ENCODE measurements at regions of chr5 and their contacts with region 1.

Region 1: GRCh38 chr5:171418316-171418981 is 998 bp upstream of the FGF18 start:
- DNase-seq: peak; percentile 90
- ATAC-seq: peak; percentile 85

Region 2: GRCh38 chr5:171494452-171495121 is 76.1 kb after region 1 on chr5:
- intact Hi-C with region 1: no loop called
- DNase-seq: peak; percentile 84
- ATAC-seq: peak; percentile 82

Region 3: GRCh38 chr5:171630027-171630669 is 211.7 kb after region 1 on chr5:
- intact Hi-C with region 1: loop called (anchors 10 kb)
- DNase-seq: peak; percentile 74
- ATAC-seq: peak; percentile 92

Region 4: GRCh38 chr5:171845857-171846256 is 427.4 kb after region 1 on chr5:
- intact Hi-C with region 1: loop called (anchors 2 kb)
- DNase-seq: peak; percentile 72
- ATAC-seq: peak; percentile 64

Region 5: DNA sequence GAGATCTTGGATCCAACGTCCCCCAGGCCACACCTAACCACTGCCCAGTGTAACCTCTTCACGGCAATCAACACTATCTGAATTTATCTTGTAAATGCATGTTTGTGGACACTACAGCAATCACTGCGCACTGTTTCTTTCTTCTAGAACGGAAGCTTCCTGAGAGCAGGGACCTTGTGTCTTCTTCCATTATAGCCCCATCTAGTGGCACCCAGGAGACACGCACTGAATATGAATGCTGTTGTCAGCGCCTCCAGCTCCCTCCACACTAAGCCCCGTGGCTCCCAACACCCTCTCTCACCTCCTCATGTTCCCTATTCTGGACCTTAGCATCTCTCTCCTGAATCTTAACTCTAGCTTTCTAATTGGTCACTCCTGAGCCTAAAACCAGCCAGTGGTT is 439.9 kb after region 1 on chr5:
- intact Hi-C with region 1: no loop called
- DNase-seq: no peak
- ATAC-seq: no peak

Region 6: GRCh38 chr5:171907725-171908343 is 489.4 kb after region 1 on chr5:
- intact Hi-C with region 1: loop called (anchors 2 kb)
- DNase-seq: no peak
- ATAC-seq: peak; percentile 90

Region 7: DNA sequence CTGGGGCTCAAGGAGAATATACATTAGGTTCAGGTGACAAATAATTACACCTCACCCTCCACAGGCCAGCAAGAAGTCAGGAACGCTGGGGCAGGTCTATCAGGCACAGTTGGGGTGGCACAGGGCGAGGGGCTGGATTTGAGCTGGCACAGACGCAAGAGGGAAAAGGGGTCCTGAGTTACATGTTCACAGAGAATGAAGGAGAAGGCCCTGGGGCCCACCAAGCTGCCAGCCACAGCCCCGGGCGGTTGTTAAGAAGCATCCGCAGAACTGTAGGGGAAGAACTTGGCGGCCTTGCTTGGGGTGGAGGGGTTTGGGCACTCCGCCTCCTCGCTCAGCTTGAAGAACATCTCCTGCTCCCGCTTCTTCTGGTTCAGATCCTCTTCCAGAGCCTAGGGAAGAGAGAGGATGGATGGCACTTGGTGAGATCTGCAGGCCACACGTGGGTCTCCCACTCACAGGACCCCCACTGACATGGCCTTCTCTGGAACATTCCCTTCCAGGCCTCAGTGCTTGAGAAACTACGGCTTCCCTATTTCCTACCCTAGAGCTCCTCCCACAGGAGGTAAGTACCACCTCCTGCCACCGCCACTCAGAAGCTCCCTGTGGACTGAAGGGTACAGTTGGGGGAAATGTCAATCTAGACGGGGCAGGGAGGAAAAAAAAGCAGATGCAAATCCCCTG is 626.3 kb after region 1 on chr5:
- intact Hi-C with region 1: loop called (anchors 10 kb)
- DNase-seq: no peak
- ATAC-seq: no peak

Measured in Right ventricle myocardium superior (tissue), 1 donor.